ENCODE measurements at regions of chr1 and their contacts with region 1.

Region 1: DNA sequence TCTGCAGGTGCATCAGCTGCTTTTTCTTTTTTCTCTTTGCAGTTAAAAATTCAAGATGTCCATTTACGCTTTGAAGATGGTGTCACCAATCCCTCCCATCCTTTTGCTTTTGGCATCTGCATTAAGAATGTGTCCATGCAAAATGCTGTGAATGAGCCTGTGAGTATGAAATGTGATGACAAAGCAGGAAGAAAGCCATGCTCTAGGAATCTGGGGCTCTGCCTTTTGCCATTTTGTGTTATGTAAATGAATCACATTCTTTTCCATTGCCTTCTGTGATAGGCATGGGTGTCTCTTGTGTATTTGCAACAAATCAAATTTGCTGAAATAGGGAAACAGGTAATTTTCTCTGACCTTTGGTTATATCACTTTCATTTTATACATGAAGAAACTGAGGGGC is 19.4 kb downstream of the VPS13D start:
- DNase-seq: peak in 1 of 2 experiments; percentile 19
- H3K4me3 ChIP-seq: no peak overlapping the region
- H3K27ac ChIP-seq: no peak overlapping the region
- H3K4me1 ChIP-seq: peaks cover 0 to 9% (median 6%) of the 10 kb centered on the region in 4 experiments; a peak in 4 of 7 replicates
- H3K27me3 ChIP-seq: no peaks in the 10 kb centered on the region
- CTCF ChIP-seq: no peak
- EP300 ChIP-seq: no peak
- POLR2A ChIP-seq: no peak
- RAD21 ChIP-seq: no peak

Region 2: GRCh38 chr1:12001249-12001917 is 247.8 kb before region 1 on chr1:
- CTCF ChIA-PET with region 1: no interaction called
- POLR2A ChIA-PET with region 1: no interaction called
- DNase-seq: peak in 1 of 2 experiments; percentile 83
- H3K4me3 ChIP-seq: no peak overlapping the region
- H3K27ac ChIP-seq: no peak overlapping the region
- H3K4me1 ChIP-seq: no peaks in the 10 kb centered on the region
- H3K27me3 ChIP-seq: no peaks in the 10 kb centered on the region
- CTCF ChIP-seq: peak; percentile 30 to 79 (median 74)
- EP300 ChIP-seq: no peak
- POLR2A ChIP-seq: no peak
- RAD21 ChIP-seq: peak; percentile 51 to 64

Region 3: GRCh38 chr1:12219800-12220199 is 29.4 kb before region 1 on chr1:
- CTCF ChIA-PET with region 1: no interaction called
- POLR2A ChIA-PET with region 1: no interaction called
- DNase-seq: no peak
- H3K4me3 ChIP-seq: no peak overlapping the region
- H3K27ac ChIP-seq: no peak overlapping the region
- H3K4me1 ChIP-seq: no peaks in the 10 kb centered on the region
- H3K27me3 ChIP-seq: no peaks in the 10 kb centered on the region; a peak in 1 of 7 replicates
- CTCF ChIP-seq: no peak
- EP300 ChIP-seq: no peak
- POLR2A ChIP-seq: no peak
- RAD21 ChIP-seq: no peak

Region 4: GRCh38 chr1:12229835-12230548 is 19.2 kb before region 1 on chr1 and contains the start of gene VPS13D:
- CTCF ChIA-PET with region 1: interaction called, 24 read pairs
- POLR2A ChIA-PET with region 1: no interaction called
- DNase-seq: peak; percentile 33 to 94
- H3K4me3 ChIP-seq: peak within 1 kb of the TSS; percentile 55 to 95 (median 66)
- H3K27ac ChIP-seq: no peak within 1 kb of the TSS
- H3K4me1 ChIP-seq: peaks cover 0 to 7% (median 3%) of the 10 kb centered on the region in 4 experiments; a peak in 4 of 7 replicates
- H3K27me3 ChIP-seq: no peaks in the 10 kb centered on the region; a peak in 1 of 7 replicates
- CTCF ChIP-seq: peak; percentile 83 to 92 (median 88)
- EP300 ChIP-seq: peak in 1 of 2 experiments; percentile 76; a peak in 1 of 3 replicates
- POLR2A ChIP-seq: no peak
- RAD21 ChIP-seq: no peak; a peak in 1 of 4 replicates
- total RNA-seq, gene VPS13D: 31.2 and 32.7 TPM in 2 replicates

Measured in H1 (cell line).